AG04450 (cell line): ENCODE measurements at regions of chr21 and their contacts with region 1.

Region 1: DNA sequence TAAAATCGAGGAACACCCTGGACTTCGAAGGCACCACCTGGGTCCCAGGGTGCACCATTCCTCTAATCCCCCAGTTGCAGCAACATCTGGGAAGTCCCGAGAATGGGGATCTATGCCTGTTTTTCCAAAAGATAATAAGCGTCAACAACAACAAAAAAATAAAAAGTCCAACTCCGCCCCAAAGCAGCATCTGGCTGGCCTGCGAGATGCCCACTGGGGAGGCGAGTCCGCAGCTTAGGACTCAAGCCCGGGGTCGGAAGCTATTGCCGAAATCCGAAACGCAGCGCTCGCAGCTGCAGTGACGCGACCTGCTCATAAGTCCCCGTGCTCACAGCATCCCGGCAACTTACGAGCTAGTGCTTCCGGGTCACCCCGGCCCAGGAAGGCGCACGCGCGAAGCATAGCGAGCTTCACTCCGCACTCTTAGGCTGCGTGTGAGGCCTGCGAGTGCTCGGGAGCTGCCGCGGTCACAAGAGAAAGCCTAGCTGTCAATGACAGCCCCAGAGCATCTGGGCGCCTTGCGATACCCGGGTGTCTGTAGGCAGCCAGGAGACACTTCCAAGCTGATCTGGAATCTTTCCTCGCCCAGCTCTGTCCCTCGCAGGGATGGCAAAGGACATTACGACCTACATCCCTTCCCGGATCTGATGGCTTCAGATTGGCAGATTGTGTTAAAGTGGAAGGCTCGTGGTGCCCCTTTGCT is 9.9 kb upstream of the LTN1 start:
- DNase-seq: peak; percentile 94
- H3K4me3 ChIP-seq: peak overlapping the region; percentile 68
- H3K27ac ChIP-seq: peak overlapping the region; percentile 89
- H3K27me3 ChIP-seq: no peaks in the 10 kb centered on the region
- CTCF ChIP-seq: no peak

Region 2: DNA sequence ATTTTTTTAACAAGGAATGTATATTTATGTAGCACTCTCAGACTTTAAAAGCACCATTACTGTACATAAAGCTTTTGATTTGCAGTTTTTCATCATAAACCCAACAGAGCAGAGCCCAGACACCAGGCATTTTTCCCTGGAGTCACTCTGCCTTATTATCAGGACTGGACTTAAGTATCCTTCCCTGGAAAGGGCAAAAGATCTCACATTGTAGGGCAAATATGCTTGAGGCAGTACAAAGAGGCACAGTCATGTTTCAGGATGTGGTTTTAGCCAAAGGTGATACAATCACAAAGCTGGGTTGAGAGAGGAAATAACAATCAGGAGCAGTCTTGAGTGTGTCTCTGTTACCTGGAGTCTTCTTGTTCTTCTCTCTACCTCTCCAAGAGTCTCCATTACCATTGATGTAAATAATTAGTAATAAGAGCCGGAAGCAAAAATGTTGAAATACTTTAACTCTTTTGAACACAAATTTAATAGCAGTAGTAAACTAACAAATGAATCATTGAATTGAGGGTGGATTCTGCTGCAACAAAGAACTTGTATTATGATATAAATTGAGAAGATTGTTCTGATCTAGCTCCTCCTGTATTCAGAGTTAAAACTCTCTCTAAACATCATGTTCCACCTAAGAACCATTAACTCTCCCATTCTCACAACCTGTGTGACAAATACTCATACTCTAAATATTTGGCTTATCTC is 170.4 kb before region 1 on chr21:
- CTCF ChIA-PET with region 1: no interaction called
- POLR2A ChIA-PET with region 1: no interaction called
- DNase-seq: no peak
- H3K4me3 ChIP-seq: no peak overlapping the region
- H3K27ac ChIP-seq: no peak overlapping the region
- H3K27me3 ChIP-seq: no peaks in the 10 kb centered on the region
- CTCF ChIP-seq: no peak

Region 3: DNA sequence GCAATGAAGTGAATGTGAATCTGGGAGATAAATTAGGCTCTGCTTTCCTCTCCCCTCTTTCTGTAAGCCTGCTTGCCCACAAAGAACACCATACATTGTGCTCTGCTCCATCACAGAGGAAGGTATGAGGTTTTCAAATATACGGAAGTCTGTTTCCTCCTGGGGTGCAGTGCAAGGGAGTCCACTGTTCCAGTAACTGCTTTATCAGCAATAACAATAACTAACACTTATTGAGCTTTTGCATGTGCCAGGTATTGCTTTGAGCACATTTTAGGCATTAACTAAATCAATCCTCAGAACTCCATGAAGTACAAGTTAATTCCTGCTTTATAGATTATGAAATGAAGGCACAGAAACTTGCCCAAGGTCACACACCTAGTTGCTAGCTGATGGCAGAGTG is 20.0 kb before region 1 on chr21:
- CTCF ChIA-PET with region 1: no interaction called
- POLR2A ChIA-PET with region 1: no interaction called
- DNase-seq: no peak
- H3K4me3 ChIP-seq: no peak overlapping the region
- H3K27ac ChIP-seq: no peak overlapping the region
- H3K27me3 ChIP-seq: no peaks in the 10 kb centered on the region
- CTCF ChIP-seq: no peak

Region 4: DNA sequence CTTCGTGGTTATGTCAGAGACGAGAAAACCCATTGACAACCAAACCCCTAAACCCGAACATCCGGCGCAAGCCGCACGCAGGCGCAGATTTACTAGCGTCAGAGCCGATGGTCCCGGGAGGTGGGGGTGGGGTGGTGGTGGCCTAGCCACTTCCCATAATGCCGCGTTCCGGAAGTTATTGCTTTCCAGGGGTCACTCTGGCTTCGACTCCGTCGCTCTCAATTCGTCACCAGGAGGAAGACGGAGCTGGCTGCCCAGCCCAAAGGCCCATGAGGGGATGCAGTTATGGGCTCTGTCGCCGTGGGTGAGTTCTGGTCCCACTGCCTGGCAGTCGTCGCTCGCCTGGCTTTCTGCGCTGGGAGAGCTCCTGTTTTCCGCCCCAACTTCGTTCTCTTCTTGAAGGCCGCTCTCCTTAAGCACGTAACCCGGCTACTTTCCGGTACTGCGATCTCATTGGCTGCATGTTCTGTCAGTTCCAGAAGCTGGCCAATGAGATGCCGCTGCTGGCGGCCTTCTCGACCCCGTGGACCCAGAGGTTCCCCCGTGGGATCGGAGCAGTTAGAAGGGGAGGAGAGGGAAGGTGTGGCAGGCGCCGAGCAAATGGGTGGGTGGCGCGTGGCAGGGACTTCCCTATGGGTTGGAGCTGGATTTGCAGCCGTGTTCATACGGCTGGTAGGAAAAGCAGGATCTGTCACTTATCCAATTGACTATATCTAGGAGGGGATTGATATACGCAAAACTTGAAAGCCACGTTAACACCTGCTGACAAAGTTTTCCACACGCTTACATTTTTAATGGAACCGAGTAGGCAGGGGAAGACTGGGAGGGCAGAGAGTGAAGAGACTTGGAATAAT is 22.1 kb after region 1 on chr21 and contains the start of gene USP16:
- CTCF ChIA-PET with region 1: no interaction called
- POLR2A ChIA-PET with region 1: interaction called, 23 read pairs
- DNase-seq: peak; percentile 99
- H3K4me3 ChIP-seq: peak within 1 kb of the TSS; percentile 96
- H3K27ac ChIP-seq: peak within 1 kb of the TSS; percentile 99
- H3K27me3 ChIP-seq: no peaks in the 10 kb centered on the region
- CTCF ChIP-seq: peak; percentile 33
- polyA plus RNA-seq, gene USP16: 22.7 and 35.6 TPM in 2 replicates